ENCODE measurements at regions of chr2 and their contacts with region 1.

Region 1: DNA sequence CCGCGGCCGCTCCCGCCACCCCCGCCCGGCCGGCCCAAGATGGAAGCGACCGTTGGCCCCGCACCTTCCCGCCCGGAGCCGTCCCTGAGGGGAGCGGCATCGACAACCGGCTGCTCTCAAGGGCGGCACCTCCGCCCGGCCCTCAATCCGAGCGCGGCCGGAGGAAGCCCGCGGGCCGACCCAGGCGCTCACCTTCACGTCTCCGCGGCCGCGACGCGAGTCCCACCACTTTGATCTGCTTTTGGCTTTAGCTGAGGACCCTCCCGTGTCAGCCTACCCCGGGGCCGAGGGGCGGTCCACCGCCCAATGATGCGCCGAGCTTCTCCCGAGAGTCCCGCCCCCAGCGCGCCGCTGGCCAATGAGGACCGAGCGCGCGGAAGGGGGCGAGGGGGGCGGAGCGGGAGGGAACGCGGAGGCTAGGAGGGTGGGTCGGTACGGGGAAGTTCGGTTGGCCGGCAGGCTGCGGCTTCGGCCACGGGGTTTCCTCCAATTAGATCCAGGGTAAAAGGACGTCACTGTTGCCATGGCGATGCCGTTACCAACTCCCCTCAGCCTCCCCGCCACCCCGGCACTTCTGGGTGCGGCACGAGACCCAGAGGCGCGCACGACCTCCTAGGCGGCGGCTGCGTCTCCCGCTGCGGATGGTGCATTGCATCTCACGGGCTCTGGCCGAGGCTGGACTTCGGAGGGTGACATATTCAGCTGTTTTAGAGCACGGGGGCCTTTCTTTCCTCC is at the start of gene YWHAQ:
- DNase-seq: peak; percentile 96
- H3K4me3 Mint-ChIP-seq: peak within 1 kb of the TSS; percentile 99
- H3K27ac Mint-ChIP-seq: peak within 1 kb of the TSS; percentile 96
- H3K4me1 Mint-ChIP-seq: peaks cover 40% of the 10 kb centered on the region
- H3K27me3 Mint-ChIP-seq: no peaks in the 10 kb centered on the region
- total RNA-seq, gene YWHAQ: 334 and 339 TPM in 2 replicates

Region 2: DNA sequence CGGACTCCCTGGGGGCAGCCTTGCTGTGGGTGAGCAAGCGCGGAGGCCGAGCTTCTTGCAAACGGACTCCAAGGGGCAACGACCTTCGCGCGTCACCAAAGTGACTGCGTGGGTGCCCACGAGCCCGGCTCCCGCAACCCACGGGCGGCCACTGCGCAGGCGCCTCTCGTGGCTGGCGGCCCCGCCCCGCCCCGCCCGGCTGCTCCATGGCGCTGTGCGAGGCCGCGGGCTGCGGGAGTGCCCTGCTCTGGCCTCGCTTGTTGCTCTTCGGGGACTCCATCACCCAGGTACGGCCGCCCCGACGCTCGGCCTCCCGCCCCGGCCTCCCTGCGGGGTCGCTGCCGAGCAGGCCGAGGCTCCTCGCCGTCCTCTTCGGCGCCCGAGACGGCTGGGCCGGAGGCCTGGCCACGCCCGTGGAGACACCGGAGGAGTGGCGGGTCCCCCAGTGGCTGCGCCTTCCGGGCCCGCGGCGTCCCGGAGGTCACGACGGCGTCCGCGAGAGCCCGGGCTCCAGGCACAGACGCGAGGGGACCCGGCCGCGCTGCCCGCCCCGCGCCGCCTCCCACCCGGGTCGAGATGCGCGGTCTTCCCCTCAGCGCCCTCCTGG is 156.5 kb before region 1 on chr2 and contains the start of gene IAH1:
- intact Hi-C with region 1: loop called (anchors 5 kb)
- DNase-seq: peak; percentile 61
- H3K4me3 Mint-ChIP-seq: peak within 1 kb of the TSS; percentile 74
- H3K27ac Mint-ChIP-seq: peak within 1 kb of the TSS; percentile 69
- H3K4me1 Mint-ChIP-seq: peaks cover 30% of the 10 kb centered on the region
- H3K27me3 Mint-ChIP-seq: no peaks in the 10 kb centered on the region
- total RNA-seq, gene IAH1: 82.0 and 82.4 TPM in 2 replicates

Region 3: DNA sequence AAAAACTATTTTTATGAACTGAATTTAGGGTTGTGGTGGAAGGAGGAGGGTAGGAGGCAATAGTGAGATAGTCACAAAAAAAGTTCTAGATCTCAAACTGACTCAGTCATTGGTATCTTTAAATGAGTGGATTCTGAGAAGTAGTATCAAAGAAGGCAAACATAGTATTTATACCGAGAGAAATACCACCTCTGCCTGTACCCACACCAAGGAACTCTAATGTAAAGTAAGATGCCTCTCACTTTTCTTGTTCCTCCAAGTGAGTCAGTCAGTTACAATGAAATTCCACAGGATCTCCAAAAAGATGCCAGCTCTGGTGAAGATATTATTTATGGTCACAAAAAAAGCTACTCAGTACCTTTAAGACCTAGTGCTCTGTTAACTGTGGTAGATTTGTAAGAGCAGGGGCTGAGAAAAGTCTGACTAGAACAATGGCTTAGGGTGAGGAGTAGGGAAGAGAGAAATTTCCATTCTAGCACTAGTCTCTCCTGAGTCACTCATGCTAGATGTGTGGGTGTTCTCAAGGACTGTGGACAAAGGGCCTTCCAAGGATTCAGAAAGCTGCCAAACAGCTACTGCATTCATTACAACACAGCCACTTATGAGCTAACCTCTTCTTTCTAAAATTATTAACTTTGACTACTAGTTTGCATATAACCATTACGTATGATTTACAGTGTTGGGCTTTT is 36.4 kb before region 1 on chr2:
- intact Hi-C with region 1: loop called (anchors 1 kb)
- DNase-seq: no peak
- H3K4me3 Mint-ChIP-seq: peak overlapping the region; percentile 42
- H3K27ac Mint-ChIP-seq: peak overlapping the region; percentile 93
- H3K4me1 Mint-ChIP-seq: peaks cover 57% of the 10 kb centered on the region
- H3K27me3 Mint-ChIP-seq: no peaks in the 10 kb centered on the region

Region 4: GRCh38 chr2:9613291-9613690 is 17.6 kb before region 1 on chr2:
- intact Hi-C with region 1: loop called (anchors 1 kb)
- DNase-seq: no peak
- H3K4me3 Mint-ChIP-seq: no peak overlapping the region
- H3K27ac Mint-ChIP-seq: no peak overlapping the region
- H3K4me1 Mint-ChIP-seq: peaks cover 78% of the 10 kb centered on the region
- H3K27me3 Mint-ChIP-seq: no peaks in the 10 kb centered on the region

Region 5: GRCh38 chr2:9648821-9649220 is 17.9 kb after region 1 on chr2:
- intact Hi-C with region 1: no loop called
- DNase-seq: no peak
- H3K4me3 Mint-ChIP-seq: no peak overlapping the region
- H3K27ac Mint-ChIP-seq: no peak overlapping the region
- H3K4me1 Mint-ChIP-seq: peaks cover 36% of the 10 kb centered on the region
- H3K27me3 Mint-ChIP-seq: no peaks in the 10 kb centered on the region

Region 6: GRCh38 chr2:9703085-9703641 is 72.2 kb after region 1 on chr2:
- intact Hi-C with region 1: loop called (anchors 2 kb)
- DNase-seq: peak; percentile 78
- H3K4me3 Mint-ChIP-seq: no peak overlapping the region
- H3K27ac Mint-ChIP-seq: peak overlapping the region; percentile 83
- H3K4me1 Mint-ChIP-seq: peaks cover 60% of the 10 kb centered on the region
- H3K27me3 Mint-ChIP-seq: no peaks in the 10 kb centered on the region

Region 7: DNA sequence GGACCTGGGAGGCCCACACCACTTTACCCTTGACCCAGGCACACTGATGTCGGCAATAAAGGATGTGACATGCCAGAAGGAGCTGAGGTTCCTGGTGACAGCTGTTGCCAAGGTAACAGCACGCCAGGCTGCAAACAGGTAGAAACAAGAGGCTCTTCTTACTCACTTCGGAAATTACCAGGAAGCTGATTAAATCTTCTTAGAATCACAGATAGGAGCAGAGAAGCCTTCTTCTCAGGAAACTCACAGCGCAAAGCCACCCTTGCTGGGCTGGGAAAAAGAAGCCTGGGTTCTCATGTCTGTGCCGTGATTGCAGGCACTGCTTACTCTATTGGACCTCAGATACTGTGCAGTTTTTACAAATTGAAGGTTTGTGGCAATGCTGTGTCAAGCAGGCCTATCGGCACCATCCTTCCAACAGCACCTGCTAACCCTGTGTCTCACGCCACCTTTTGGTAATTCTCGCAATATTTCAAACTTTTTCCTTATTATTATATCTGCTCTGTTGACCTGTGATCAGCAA is 151.3 kb after region 1 on chr2:
- intact Hi-C with region 1: loop called (anchors 2 kb)
- DNase-seq: peak; percentile 82
- H3K4me3 Mint-ChIP-seq: peak overlapping the region; percentile 66
- H3K27ac Mint-ChIP-seq: peak overlapping the region; percentile 99
- H3K4me1 Mint-ChIP-seq: peaks cover 67% of the 10 kb centered on the region
- H3K27me3 Mint-ChIP-seq: no peaks in the 10 kb centered on the region

Region 8: GRCh38 chr2:9793156-9793917 is 162.4 kb after region 1 on chr2:
- intact Hi-C with region 1: no loop called
- DNase-seq: no peak
- H3K4me3 Mint-ChIP-seq: no peak overlapping the region
- H3K27ac Mint-ChIP-seq: no peak overlapping the region
- H3K4me1 Mint-ChIP-seq: peaks cover 9% of the 10 kb centered on the region
- H3K27me3 Mint-ChIP-seq: no peaks in the 10 kb centered on the region

Measured in activated T-helper 2 cell treated with anti-CD3 and anti-CD28 coated beads, Interferon-gamma antibody, Interleukin-2, Interleukin-4, amounts not matched to agents 10 μg/mL and 5 μg/mL and 100 μg/mL, durations not matched to agents 14 hours and 24 hours and 36 hours (primary cell).